Activated T-helper 1 cell treated with anti-CD3 and anti-CD28 coated beads, Interleukin-12 subunit alpha, Interleukin-12 subunit beta, Interleukin-2, Interleukin-4 antibody, amounts not matched to agents 30 ng/mL and 10 ng/mL and 1 ng/mL, durations not matched to agents 14 hours and 24 hours and 36 hours (primary cell): ENCODE measurements at regions of chr20 and their contacts with region 1.

Region 1: DNA sequence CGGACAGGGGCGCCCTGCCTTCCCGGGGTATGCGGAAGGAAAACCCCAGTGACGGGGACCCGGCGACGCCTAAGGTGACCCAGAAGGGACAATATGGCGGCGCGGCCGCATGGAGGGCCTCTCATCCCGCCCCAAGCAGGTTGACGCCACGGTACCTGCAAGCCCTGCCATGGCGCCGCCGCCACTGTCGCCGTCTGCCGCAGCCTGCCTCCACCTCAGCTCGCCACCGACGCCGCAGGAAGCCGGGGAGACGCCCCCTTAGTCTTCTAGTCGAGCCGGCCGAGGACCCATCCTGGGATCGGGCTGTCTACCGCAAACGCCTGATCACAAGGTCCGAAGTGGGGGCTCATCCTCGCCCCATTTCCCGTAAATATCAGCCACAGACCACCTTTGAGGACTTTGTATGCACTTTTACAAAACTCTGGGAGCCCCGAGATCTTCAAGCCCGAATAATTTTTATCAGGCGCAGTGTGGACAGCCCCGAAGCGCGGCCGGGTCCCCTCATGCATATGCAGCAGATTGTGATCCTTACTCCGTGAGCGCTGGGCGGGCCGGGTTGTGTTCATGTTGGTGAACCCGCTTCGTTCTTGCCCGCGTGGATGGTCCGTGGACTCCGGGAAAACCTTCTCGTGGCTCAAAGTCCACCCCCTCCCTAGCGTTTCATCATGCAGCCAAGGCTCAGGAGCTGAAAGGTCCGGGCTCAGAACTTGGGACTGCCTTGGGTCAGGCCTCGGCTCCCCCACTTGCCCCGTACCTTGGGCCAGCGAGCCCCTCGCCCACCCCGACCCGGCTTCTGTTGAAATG is at the start of gene BLCAP:
- DNase-seq: peak; percentile 86
- H3K4me3 Mint-ChIP-seq: peak within 1 kb of the TSS; percentile 86
- H3K27ac Mint-ChIP-seq: peak within 1 kb of the TSS; percentile 99
- H3K4me1 Mint-ChIP-seq: peaks cover 46% of the 10 kb centered on the region
- H3K27me3 Mint-ChIP-seq: peaks cover 5% of the 10 kb centered on the region
- total RNA-seq, gene BLCAP: 30.9 and 32.1 TPM in 2 replicates

Region 2: DNA sequence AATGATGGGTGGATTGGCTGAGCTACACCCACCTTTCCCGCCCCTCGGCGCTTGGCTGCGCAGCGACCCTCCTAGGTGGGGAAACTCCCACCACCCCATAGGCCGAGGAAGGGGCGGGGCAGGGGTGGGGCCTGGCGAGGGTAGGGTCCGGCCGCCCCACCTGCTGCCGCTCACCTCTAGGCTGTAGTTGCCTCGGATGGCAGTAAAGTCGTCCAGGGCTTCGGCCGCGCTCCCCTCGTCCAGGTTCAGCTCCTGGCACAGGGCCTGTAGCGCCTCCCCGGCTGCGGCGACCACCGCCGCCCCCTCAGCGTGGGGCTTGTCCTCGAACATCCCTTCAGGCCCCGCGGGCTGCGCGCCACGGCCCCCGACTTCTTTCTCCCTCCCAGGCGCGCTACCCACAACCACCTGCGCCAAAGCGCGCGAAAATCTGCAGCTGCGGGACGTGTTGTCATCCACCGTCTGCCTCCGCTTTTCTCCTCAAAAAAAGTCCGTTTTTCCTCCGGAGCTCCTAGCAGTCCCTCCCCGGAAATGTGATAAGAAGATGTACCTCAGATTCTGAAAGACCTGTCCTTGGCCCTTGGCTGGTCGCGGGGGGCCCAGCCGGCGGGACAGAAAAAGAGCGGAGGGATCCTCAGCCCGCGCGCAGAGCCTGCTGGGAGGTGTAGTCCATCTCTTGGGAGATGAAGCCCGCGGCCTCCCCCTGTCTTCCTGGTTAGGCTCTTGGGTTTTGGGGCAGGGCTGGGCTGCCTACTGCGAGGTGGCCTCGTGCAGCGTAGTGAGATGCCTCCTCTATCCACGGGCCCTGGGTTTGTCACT is 432.0 kb before region 1 on chr20 and contains the start of gene RBL1:
- intact Hi-C with region 1: loop called (anchors 5 kb)
- DNase-seq: peak; percentile 83
- H3K4me3 Mint-ChIP-seq: peak within 1 kb of the TSS; percentile 99
- H3K27ac Mint-ChIP-seq: peak within 1 kb of the TSS; percentile 100
- H3K4me1 Mint-ChIP-seq: peaks cover 37% of the 10 kb centered on the region
- H3K27me3 Mint-ChIP-seq: peaks cover 3% of the 10 kb centered on the region
- total RNA-seq, gene RBL1: 49.2 and 53.7 TPM in 2 replicates

Region 3: GRCh38 chr20:37336369-37337207 is 191.3 kb before region 1 on chr20:
- intact Hi-C with region 1: loop called (anchors 5 kb)
- DNase-seq: peak; percentile 8
- H3K4me3 Mint-ChIP-seq: peak overlapping the region; percentile 61
- H3K27ac Mint-ChIP-seq: peak overlapping the region; percentile 55
- H3K4me1 Mint-ChIP-seq: peaks cover 22% of the 10 kb centered on the region
- H3K27me3 Mint-ChIP-seq: no peaks in the 10 kb centered on the region

Region 4: DNA sequence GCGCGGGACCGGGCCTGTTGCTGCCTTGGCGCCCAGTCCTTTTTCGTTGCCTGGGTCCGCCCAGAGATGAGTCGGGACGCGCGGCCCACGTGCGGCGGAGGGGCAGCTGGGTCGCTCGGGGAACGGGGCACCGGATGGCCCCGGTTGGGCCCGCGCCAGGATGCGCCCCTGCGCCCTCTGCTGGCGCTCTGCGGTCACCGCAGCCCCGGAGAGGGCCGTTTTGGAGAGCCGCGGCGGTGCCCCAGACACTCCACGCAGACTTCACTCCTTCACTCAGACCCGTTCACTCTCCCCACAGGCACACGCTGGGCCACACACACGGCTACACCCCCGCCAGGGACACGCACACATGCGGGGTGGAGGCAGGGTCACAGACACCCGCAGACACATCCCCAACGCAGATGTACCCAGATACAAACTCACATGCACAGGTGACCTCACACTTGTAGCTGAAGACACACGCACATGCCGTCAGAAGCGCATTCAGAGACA is 143.1 kb before region 1 on chr20:
- intact Hi-C with region 1: loop called (anchors 2 kb)
- DNase-seq: peak; percentile 78
- H3K4me3 Mint-ChIP-seq: peak overlapping the region; percentile 84
- H3K27ac Mint-ChIP-seq: no peak overlapping the region
- H3K4me1 Mint-ChIP-seq: peaks cover 6% of the 10 kb centered on the region
- H3K27me3 Mint-ChIP-seq: peaks cover 9% of the 10 kb centered on the region

Region 5: DNA sequence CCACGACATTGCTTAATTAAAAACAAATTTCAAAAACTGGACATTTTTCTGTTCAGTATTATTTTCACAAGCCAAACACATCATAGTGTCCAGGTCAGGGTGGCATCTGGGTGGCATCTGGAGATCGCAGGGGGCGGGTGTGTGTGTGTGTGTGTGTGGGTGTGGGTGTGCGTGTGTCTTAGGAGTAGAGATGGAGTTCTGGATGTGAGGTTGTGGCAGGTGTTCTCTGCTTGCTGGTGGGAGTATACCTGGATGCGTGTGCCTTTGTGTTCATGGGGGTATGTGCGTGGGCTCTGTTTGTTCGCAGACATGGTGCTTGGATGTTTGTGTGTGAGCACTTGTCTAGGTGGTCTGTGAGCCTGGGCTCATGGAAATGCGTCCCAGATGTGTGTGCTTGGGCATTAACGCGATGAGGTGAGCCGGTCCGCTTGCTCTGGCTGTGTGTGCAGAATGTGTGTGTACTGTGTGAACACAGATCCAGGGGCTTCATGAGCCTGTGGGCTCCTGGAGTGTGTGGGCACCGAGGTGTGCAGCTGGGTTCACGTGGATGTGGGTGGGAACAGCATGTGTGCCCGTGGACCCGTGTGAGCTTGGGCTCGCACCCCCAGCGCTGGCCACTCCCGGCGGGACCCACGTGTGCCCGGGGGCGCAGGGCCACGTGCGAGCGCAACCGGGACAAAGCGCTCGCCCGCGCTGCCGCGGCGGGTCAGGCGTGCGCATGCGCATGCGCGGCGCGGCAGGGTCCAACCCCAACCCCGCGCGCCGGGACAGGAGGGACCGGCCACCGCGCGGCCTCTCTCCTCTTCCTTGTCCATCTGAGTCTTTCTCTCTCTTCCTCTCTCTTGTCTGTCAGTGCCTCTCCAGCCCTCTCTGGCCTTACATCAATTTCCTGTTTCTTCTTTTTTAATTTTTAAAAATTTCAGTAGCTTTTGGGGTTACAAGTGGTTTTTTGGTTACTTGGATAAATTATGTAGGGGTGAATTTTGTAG is 121.5 kb before region 1 on chr20:
- intact Hi-C with region 1: loop called (anchors 5 kb)
- DNase-seq: peak; percentile 16
- H3K4me3 Mint-ChIP-seq: peak overlapping the region; percentile 58
- H3K27ac Mint-ChIP-seq: peak overlapping the region; percentile 78
- H3K4me1 Mint-ChIP-seq: peaks cover 12% of the 10 kb centered on the region
- H3K27me3 Mint-ChIP-seq: peaks cover 22% of the 10 kb centered on the region

Region 6: GRCh38 chr20:37498066-37498665 is 29.7 kb before region 1 on chr20:
- intact Hi-C with region 1: no loop called
- DNase-seq: no peak
- H3K4me3 Mint-ChIP-seq: no peak overlapping the region
- H3K27ac Mint-ChIP-seq: no peak overlapping the region
- H3K4me1 Mint-ChIP-seq: no peaks in the 10 kb centered on the region
- H3K27me3 Mint-ChIP-seq: peaks cover 2% of the 10 kb centered on the region

Region 7: DNA sequence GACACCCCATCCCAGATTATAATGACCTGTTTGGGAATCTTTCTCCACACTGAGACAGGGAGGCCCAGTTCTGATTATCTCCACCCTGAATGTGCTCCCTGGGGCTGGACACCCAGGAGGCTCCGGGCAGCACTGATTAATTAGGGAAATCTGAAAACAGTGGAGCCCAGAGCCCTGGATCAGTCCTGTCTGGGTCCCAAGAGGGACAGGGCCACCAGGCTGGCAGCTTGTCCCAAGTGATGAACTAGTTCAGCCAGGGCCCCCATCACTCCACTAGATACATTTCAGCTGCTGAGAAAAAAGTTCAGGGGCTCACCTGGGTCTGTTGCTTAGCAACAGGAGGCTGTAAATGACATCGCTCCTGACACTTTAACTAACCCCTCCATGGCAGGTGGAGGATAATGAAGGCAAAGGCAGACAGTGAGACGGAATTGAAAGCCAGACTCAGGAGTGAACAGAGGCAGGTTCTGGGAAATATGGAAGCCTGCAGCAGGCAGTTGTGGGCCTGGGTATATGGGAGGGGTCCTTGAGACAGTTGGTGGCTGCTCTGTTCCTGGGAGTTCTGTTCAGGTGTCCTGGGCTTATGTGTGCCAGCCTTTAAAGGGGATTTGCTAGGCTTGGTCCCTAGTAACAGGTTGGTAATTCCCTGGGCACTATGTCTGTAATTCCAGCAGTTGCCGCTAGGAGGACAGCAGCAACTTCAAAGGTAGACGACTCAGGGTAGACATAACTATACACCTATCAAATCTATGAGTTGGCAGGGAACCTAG is 87.7 kb after region 1 on chr20:
- intact Hi-C with region 1: no loop called
- DNase-seq: peak; percentile 31
- H3K4me3 Mint-ChIP-seq: no peak overlapping the region
- H3K27ac Mint-ChIP-seq: no peak overlapping the region
- H3K4me1 Mint-ChIP-seq: no peaks in the 10 kb centered on the region
- H3K27me3 Mint-ChIP-seq: peaks cover 6% of the 10 kb centered on the region

Region 8: DNA sequence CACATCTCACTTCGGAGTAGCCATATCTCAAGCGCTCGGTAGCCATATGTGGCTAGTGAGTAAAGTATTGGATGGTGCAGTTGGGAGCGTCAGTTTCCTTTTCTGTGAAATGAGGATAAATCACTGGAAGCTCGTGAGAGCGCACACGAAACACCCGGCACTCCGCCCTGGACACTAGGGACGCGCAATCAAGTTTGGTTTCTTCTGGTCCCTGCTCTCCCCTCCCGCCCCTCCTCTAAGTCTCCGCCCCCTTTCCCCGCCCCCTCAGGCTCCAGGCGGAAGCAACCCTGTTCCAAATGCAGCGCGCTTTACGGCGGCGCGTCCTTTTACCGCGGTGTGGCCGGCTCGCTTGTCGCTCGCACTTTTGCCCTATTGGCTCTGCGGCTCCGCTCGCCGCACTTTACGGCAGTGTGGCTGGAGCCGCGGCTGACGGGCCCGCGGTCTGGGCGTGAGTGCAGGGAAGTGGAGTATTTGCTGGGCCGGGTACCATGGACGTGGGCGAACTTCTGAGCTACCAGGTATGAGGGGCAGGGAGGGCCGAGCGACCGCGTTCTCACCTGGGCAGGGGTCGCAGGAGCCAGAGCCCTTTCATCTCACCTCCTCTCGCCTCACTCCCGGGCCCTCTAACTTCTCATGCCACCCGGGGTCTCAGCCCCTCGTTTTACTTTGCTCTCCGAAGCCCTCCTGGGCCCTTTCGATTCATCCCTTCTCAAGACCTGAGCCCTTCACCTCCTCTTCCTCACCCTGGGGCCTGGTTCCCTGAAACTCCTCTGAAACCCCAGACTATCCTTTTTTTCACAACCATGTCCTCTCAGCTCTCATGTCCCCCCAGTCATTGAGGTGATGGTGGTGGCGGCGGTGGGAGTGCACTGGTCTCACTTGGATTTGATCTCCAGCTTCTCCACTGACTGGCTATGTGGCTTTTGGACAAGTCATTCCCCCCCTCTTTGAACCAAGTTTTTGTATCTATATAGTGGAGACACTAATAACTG is 166.1 kb after region 1 on chr20 and contains the start of gene CTNNBL1:
- intact Hi-C with region 1: loop called (anchors 1 kb)
- DNase-seq: peak; percentile 95
- H3K4me3 Mint-ChIP-seq: peak within 1 kb of the TSS; percentile 96
- H3K27ac Mint-ChIP-seq: peak within 1 kb of the TSS; percentile 92
- H3K4me1 Mint-ChIP-seq: peaks cover 27% of the 10 kb centered on the region
- H3K27me3 Mint-ChIP-seq: peaks cover 7% of the 10 kb centered on the region
- total RNA-seq, gene CTNNBL1: 93.5 and 105 TPM in 2 replicates